ENCODE measurements at regions of chr1 and their contacts with region 1.

Region 1: DNA sequence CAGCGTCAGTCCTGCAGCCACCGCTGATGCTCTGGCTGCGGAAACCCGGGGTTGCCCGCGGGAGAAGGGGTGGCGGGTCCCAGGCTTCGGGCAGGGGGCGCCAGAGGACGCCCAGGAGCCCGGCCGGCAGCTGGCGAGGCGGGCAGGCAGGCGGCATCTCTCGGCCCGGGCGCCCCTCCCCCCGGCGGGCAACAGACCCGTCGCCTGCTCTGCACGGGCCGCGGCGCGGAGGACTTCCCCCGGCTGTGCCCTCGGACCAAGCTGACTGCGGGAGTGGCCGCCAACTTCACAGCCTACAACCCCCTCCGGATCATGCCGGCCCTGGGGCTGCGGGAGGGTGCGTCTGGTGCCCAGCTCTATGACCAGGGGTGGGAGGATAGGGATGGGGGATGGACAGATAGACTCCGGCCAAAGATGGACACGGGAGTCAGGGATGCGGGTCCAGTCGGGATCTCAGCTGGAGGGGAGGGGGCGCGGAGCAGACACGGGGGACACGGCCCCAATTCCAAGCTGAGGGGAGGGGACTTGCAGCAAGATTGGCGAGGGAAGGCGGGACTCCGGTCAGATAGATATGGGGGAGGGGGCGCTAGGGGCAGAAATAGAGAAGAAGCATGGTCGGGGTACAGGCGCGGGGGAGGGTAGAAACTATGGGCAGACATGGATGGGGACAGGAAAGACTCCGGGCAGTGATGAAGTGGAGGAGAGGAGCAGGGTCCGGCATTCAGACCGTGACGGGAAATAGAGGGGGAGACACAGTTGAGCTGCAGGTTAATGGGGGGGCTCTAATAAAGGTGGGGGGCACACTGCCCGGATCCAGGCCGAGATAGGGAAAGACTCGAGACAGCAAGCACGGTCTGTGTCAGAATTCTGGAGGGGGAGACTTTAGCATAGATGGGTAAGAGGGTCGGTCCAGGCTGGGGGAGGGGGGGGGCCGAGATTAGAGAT is 1.1 kb downstream of the ADGRB2 start:
- DNase-seq: no peak
- H3K4me3 ChIP-seq: peak overlapping the region; percentile 65
- H3K27ac ChIP-seq: no peak overlapping the region
- H3K27me3 ChIP-seq: no peaks in the 10 kb centered on the region
- CTCF ChIP-seq: peak; percentile 55

Region 2: GRCh38 chr1:31625494-31626222 is 137.3 kb before region 1 on chr1:
- CTCF ChIA-PET with region 1: no interaction called
- POLR2A ChIA-PET with region 1: no interaction called
- DNase-seq: no peak
- H3K4me3 ChIP-seq: no peak overlapping the region
- H3K27ac ChIP-seq: peak overlapping the region; percentile 3
- H3K27me3 ChIP-seq: no peaks in the 10 kb centered on the region
- CTCF ChIP-seq: no peak

Region 3: GRCh38 chr1:31705080-31705866 is 57.7 kb before region 1 on chr1:
- CTCF ChIA-PET with region 1: interaction called, 3 read pairs
- POLR2A ChIA-PET with region 1: interaction called, 13 read pairs
- DNase-seq: no peak
- H3K4me3 ChIP-seq: peak overlapping the region; percentile 81
- H3K27ac ChIP-seq: peak overlapping the region; percentile 78
- H3K27me3 ChIP-seq: no peaks in the 10 kb centered on the region
- CTCF ChIP-seq: peak; percentile 40

Region 4: GRCh38 chr1:31789259-31790065 is 26.5 kb after region 1 on chr1:
- CTCF ChIA-PET with region 1: interaction called, 4 read pairs
- POLR2A ChIA-PET with region 1: interaction called, 11 read pairs
- DNase-seq: peak; percentile 80
- H3K4me3 ChIP-seq: peak overlapping the region; percentile 87
- H3K27ac ChIP-seq: peak overlapping the region; percentile 81
- H3K27me3 ChIP-seq: no peaks in the 10 kb centered on the region
- CTCF ChIP-seq: peak; percentile 94

Region 5: DNA sequence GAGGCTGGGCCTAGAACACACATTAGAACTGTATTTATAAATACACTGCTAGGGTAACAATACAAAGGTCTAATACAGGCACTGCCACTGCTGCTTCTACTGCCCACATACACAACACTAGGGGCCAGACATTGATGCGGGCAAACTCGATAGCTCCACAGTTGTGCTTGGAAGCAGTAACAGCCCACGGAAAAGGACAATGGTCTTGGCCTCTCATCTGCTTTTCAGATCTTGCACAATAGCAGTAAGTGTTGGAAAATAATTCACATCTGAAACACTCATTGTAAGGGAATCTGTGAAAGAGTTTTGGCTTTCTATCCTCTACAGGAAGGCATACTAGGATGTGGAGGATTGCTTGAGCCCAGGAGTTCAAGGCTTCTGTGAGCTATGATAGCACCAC is 59.8 kb after region 1 on chr1:
- CTCF ChIA-PET with region 1: interaction called, 11 read pairs
- POLR2A ChIA-PET with region 1: no interaction called
- DNase-seq: no peak
- H3K4me3 ChIP-seq: no peak overlapping the region
- H3K27ac ChIP-seq: no peak overlapping the region
- H3K27me3 ChIP-seq: no peaks in the 10 kb centered on the region
- CTCF ChIP-seq: no peak